ENCODE measurements at regions of chr18 and their contacts with region 1.

Region 1: DNA sequence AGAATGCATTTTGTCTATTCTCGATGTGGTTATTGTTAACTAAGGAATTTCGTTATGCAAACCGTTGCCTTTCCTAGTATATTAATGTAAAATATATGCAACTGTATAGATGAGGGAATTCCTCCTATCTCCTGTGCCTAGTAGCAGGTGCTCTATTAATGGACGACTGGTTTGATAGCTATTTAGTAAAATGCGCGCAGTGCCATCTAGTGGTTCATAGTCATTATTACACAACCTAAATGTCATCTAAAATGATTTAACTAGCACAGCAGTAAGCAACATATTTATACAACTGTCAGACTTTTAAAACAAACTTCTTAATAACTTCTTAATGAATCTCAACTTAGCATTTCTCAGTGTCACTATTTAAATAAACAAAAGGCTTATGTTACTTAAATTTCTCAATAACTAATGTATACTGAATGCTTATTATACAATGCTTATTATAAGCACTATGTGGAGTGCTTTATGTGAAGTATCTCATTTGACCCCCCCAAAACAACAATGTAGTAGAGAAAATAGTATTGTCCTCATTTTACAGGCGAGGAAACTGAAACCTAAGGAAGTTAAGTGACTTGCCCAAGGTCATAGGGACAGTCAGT is 77.9 kb downstream of the DTNA start:
- DNase-seq: peak; percentile 11
- ATAC-seq: peak; percentile 79
- H3K4me3 ChIP-seq: no peak overlapping the region
- H3K27ac ChIP-seq: no peak overlapping the region
- H3K4me1 ChIP-seq: no peaks in the 10 kb centered on the region
- H3K27me3 ChIP-seq: no peaks in the 10 kb centered on the region; a peak in 1 of 4 replicates
- CTCF ChIP-seq: peak; percentile 43 to 70 (median 58); a peak in 5 of 6 replicates
- EP300 ChIP-seq: no peak
- POLR2A ChIP-seq: no peak
- RAD21 ChIP-seq: peak; percentile 81

Region 2: GRCh38 chr18:33231474-33232317 is 1556.3 kb before region 1 on chr18:
- CTCF ChIA-PET with region 1: interaction called, 6 read pairs
- POLR2A ChIA-PET with region 1: no interaction called
- RAD21 ChIA-PET with region 1: interaction called, 5 read pairs
- SMC1A ChIA-PET with region 1: interaction called, 3 read pairs
- in situ Hi-C with region 1: no loop called
- intact Hi-C with region 1: loop called (anchors 5 kb)
- DNase-seq: peak; percentile 17
- ATAC-seq: peak; percentile 92
- H3K4me3 ChIP-seq: no peak overlapping the region
- H3K27ac ChIP-seq: no peak overlapping the region
- H3K4me1 ChIP-seq: no peaks in the 10 kb centered on the region
- H3K27me3 ChIP-seq: no peaks in the 10 kb centered on the region
- CTCF ChIP-seq: peak; percentile 85 to 89 (median 88)
- EP300 ChIP-seq: no peak
- POLR2A ChIP-seq: no peak
- RAD21 ChIP-seq: peak; percentile 89

Region 3: DNA sequence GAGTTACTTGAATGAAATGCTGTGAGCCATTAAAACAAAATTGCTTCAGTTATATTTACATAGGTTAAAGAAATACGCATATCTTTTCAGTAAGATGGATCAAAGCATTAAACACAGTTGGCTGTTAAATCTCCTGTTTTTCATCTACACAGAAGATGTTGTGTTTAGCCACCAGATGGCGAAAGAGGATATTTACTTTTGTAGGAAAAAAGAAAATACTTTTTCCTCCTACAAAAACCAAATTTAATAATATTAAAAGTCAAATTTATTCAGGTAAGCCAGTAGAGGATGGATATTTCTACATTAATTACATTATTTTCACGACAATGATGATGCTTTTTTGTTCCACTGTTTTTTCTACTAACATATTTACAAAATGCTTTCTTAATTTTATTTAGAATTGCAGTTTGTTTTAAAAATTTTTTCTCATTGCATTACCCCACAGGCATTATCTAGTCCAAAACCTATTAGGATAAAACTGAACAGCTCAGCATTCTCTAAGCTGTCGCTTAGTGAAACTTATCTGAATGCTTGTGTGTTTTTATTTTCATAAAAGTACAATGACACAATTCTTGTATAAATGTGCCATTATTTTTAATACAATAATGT is 1036.3 kb before region 1 on chr18:
- CTCF ChIA-PET with region 1: interaction called, 3 read pairs
- POLR2A ChIA-PET with region 1: no interaction called
- RAD21 ChIA-PET with region 1: no interaction called
- SMC1A ChIA-PET with region 1: no interaction called
- in situ Hi-C with region 1: no loop called
- intact Hi-C with region 1: loop called (anchors 10 kb)
- DNase-seq: no peak
- ATAC-seq: peak; percentile 34; the same call in 1 of the 3 replicates
- H3K4me3 ChIP-seq: no peak overlapping the region
- H3K27ac ChIP-seq: no peak overlapping the region
- H3K4me1 ChIP-seq: no peaks in the 10 kb centered on the region
- H3K27me3 ChIP-seq: no peaks in the 10 kb centered on the region
- CTCF ChIP-seq: peak; percentile 31 to 49 (median 41); a peak in 4 of 6 replicates
- EP300 ChIP-seq: no peak
- POLR2A ChIP-seq: no peak
- RAD21 ChIP-seq: peak; percentile 37; the same call in 1 of the 2 replicates

Region 4: GRCh38 chr18:34592961-34593382 is 195.1 kb before region 1 on chr18:
- CTCF ChIA-PET with region 1: interaction called, 6 read pairs
- POLR2A ChIA-PET with region 1: no interaction called
- RAD21 ChIA-PET with region 1: interaction called, 3 read pairs
- SMC1A ChIA-PET with region 1: interaction called, 39 read pairs
- in situ Hi-C with region 1: no loop called
- intact Hi-C with region 1: loop called (anchors 5 kb)
- DNase-seq: no peak
- ATAC-seq: peak; percentile 54
- H3K4me3 ChIP-seq: no peak overlapping the region
- H3K27ac ChIP-seq: no peak overlapping the region
- H3K4me1 ChIP-seq: no peaks in the 10 kb centered on the region
- H3K27me3 ChIP-seq: no peaks in the 10 kb centered on the region; a peak in 1 of 4 replicates
- CTCF ChIP-seq: no peak
- EP300 ChIP-seq: no peak
- POLR2A ChIP-seq: no peak
- RAD21 ChIP-seq: no peak

Region 5: GRCh38 chr18:34729264-34729663 is 58.8 kb before region 1 on chr18:
- CTCF ChIA-PET with region 1: interaction called, 13 read pairs
- POLR2A ChIA-PET with region 1: no interaction called
- RAD21 ChIA-PET with region 1: no interaction called
- SMC1A ChIA-PET with region 1: interaction called, 6 read pairs
- in situ Hi-C with region 1: no loop called
- intact Hi-C with region 1: loop called (anchors 1 kb)
- DNase-seq: no peak
- ATAC-seq: peak; percentile 84
- H3K4me3 ChIP-seq: no peak overlapping the region
- H3K27ac ChIP-seq: no peak overlapping the region
- H3K4me1 ChIP-seq: no peaks in the 10 kb centered on the region
- H3K27me3 ChIP-seq: no peaks in the 10 kb centered on the region
- CTCF ChIP-seq: peak; percentile 39 to 46 (median 45); a peak in 5 of 6 replicates
- EP300 ChIP-seq: no peak
- POLR2A ChIP-seq: no peak
- RAD21 ChIP-seq: peak; percentile 24; the same call in 1 of the 2 replicates

Region 6: DNA sequence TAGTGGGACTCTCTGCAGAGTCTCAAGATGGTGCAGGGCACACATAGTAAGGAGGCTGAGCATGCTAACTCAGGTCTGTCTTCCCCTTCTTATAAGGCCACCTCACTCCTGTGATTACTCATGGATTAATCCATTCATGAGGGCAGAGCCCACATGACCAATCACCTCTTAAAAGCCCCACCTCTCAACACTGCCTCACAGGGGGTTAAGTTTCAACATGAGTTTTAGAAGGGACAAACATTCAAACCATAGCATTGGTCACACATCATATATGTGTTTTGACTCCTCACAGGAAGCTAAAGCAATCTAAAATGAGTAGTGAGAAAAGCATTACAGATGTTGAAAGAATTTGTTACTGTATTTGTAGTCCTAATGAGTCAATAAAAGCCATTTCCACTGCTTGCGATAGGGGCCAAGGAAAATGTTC is 20.4 kb before region 1 on chr18:
- CTCF ChIA-PET with region 1: interaction called, 16 read pairs
- POLR2A ChIA-PET with region 1: no interaction called
- RAD21 ChIA-PET with region 1: interaction called, 6 read pairs
- SMC1A ChIA-PET with region 1: interaction called, 3 read pairs
- in situ Hi-C with region 1: no loop called
- intact Hi-C with region 1: no loop called
- DNase-seq: no peak
- ATAC-seq: peak; percentile 89
- H3K4me3 ChIP-seq: no peak overlapping the region
- H3K27ac ChIP-seq: no peak overlapping the region
- H3K4me1 ChIP-seq: no peaks in the 10 kb centered on the region
- H3K27me3 ChIP-seq: no peaks in the 10 kb centered on the region
- CTCF ChIP-seq: no peak
- EP300 ChIP-seq: no peak
- POLR2A ChIP-seq: no peak
- RAD21 ChIP-seq: no peak

Region 7: GRCh38 chr18:34773961-34774766 is 13.9 kb before region 1 on chr18:
- CTCF ChIA-PET with region 1: interaction called, 16 read pairs
- POLR2A ChIA-PET with region 1: no interaction called
- RAD21 ChIA-PET with region 1: no interaction called
- SMC1A ChIA-PET with region 1: interaction called, 5 read pairs
- in situ Hi-C with region 1: no loop called
- intact Hi-C with region 1: no loop called
- DNase-seq: no peak
- ATAC-seq: no peak
- H3K4me3 ChIP-seq: no peak overlapping the region
- H3K27ac ChIP-seq: no peak overlapping the region
- H3K4me1 ChIP-seq: no peaks in the 10 kb centered on the region
- H3K27me3 ChIP-seq: peaks cover 0 to 2% of the 10 kb centered on the region in 2 experiments; a peak in 1 of 4 replicates
- CTCF ChIP-seq: no peak
- EP300 ChIP-seq: no peak
- POLR2A ChIP-seq: no peak
- RAD21 ChIP-seq: no peak

Measured in GM12878 (cell line).